Endothelial cell of umbilical vein (primary cell): ENCODE measurements at regions of chr16 and their contacts with region 1.

Region 1: DNA sequence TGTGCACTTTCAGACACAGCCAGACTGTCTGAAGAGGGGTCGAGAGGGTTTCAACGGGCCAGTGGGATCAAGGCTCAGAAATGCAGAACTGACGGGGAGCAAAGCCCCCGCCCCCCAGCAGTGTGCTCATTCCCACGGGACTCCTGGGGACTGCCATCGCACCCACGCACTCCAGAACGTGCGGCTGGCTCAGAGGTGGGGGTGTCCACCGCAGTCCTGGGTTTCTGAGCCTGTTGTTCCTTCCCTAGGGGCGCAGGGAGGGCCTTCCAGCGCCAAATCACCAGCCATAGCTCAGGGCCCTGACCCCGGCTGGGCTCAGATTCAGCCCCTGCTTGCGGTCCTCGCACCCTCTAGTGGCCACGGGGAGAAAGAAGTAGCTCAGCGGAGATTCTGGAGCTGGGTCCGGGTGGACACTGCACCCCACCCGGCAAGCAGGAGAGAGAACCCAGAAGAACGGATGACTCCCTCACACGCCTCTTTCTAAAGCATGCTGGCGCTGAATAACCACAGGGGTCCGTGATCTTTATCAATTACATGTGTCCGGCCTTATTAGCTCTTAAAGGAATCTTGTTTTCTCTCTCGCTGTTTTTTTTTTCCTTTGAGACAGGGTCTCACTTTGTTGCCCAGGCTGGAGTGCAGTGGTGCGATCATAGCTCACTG is 45.0 kb upstream of the USP7 start:
- DNase-seq: peak; percentile 59
- H3K4me3 ChIP-seq: peak overlapping the region in 1 of 3 experiments; percentile 3
- H3K27ac ChIP-seq: no peak overlapping the region
- H3K4me1 ChIP-seq: peaks cover 4% of the 10 kb centered on the region
- H3K27me3 ChIP-seq: no peaks in the 10 kb centered on the region
- CTCF ChIP-seq: peak; percentile 70 to 90
- POLR2A ChIP-seq: no peak

Region 2: GRCh38 chr16:8660841-8661301 is 347.9 kb before region 1 on chr16:
- CTCF ChIA-PET with region 1: interaction called, 9 read pairs
- POLR2A ChIA-PET with region 1: no interaction called
- dilution Hi-C with region 1: no loop called
- intact Hi-C with region 1: loop called (anchors 2 kb)
- DNase-seq: peak; percentile 53
- H3K4me3 ChIP-seq: no peak overlapping the region
- H3K27ac ChIP-seq: no peak overlapping the region
- H3K4me1 ChIP-seq: no peaks in the 10 kb centered on the region
- H3K27me3 ChIP-seq: peaks cover 0 to 6% of the 10 kb centered on the region in 2 experiments
- CTCF ChIP-seq: peak; percentile 65 to 75
- POLR2A ChIP-seq: no peak

Region 3: GRCh38 chr16:8899709-8900317 is 108.9 kb before region 1 on chr16:
- CTCF ChIA-PET with region 1: interaction called, 32 read pairs
- POLR2A ChIA-PET with region 1: no interaction called
- dilution Hi-C with region 1: no loop called
- intact Hi-C with region 1: loop called (anchors 1 kb)
- DNase-seq: no peak
- H3K4me3 ChIP-seq: no peak overlapping the region
- H3K27ac ChIP-seq: no peak overlapping the region
- H3K4me1 ChIP-seq: no peaks in the 10 kb centered on the region
- H3K27me3 ChIP-seq: no peaks in the 10 kb centered on the region
- CTCF ChIP-seq: no peak
- POLR2A ChIP-seq: no peak

Region 4: GRCh38 chr16:8936421-8936820 is 72.3 kb before region 1 on chr16:
- CTCF ChIA-PET with region 1: interaction called, 76 read pairs
- POLR2A ChIA-PET with region 1: interaction called, 3 read pairs
- dilution Hi-C with region 1: no loop called
- intact Hi-C with region 1: loop called (anchors 1 kb)
- DNase-seq: peak; percentile 29
- H3K4me3 ChIP-seq: no peak overlapping the region
- H3K27ac ChIP-seq: no peak overlapping the region
- H3K4me1 ChIP-seq: no peaks in the 10 kb centered on the region
- H3K27me3 ChIP-seq: no peaks in the 10 kb centered on the region
- CTCF ChIP-seq: peak; percentile 27 to 57
- POLR2A ChIP-seq: no peak

Region 5: DNA sequence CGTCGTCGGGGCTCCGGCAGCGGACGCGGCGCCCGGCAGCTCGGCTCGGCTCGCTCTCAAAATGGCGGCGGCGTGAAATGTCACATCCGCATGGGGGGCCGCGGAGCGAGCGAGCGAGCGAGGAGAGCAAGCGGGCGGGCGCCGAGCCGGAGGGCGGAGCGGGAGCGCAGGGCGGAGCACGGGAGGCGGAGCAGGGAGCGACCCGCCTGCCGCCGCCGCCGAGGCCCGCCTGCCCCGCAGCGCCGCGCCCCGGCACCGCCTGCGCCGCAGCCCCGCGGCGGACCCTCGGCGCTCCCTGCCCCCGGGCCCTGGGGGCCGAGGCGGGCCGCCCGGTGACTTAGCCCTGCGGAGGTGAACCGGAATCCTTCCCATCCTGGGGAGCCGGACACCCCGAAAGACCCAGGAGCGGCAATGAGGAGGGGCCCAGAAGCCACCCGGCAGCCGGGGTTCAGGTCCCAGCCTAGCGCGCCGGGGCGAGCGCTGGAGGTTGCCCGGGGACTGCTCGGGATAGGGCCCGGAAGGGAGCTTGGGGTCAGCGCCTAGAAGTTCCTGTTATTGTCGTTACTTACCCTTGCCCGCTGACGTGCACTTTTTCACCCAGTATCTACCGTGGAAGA is 44.8 kb before region 1 on chr16 and contains the start of gene USP7:
- CTCF ChIA-PET with region 1: interaction called, 10 read pairs
- POLR2A ChIA-PET with region 1: no interaction called
- dilution Hi-C with region 1: no loop called
- intact Hi-C with region 1: loop called (anchors 2 kb)
- DNase-seq: peak; percentile 88
- H3K4me3 ChIP-seq: peak within 1 kb of the TSS; percentile 45 to 82 (median 64)
- H3K27ac ChIP-seq: peak within 1 kb of the TSS; percentile 51
- H3K4me1 ChIP-seq: peaks cover 34% of the 10 kb centered on the region
- H3K27me3 ChIP-seq: no peaks in the 10 kb centered on the region
- CTCF ChIP-seq: no peak
- POLR2A ChIP-seq: peak; percentile 68
- total RNA-seq, gene USP7: 130 and 138 TPM in 2 replicates

Region 6: GRCh38 chr16:9033125-9033830 is 24.5 kb after region 1 on chr16:
- CTCF ChIA-PET with region 1: interaction called, 48 read pairs
- POLR2A ChIA-PET with region 1: no interaction called
- dilution Hi-C with region 1: no loop called
- intact Hi-C with region 1: no loop called
- DNase-seq: peak; percentile 41
- H3K4me3 ChIP-seq: no peak overlapping the region
- H3K27ac ChIP-seq: no peak overlapping the region
- H3K4me1 ChIP-seq: no peaks in the 10 kb centered on the region
- H3K27me3 ChIP-seq: no peaks in the 10 kb centered on the region
- CTCF ChIP-seq: peak; percentile 26 to 70
- POLR2A ChIP-seq: no peak

Region 7: GRCh38 chr16:9134739-9135138 is 126.0 kb after region 1 on chr16:
- CTCF ChIA-PET with region 1: interaction called, 42 read pairs
- POLR2A ChIA-PET with region 1: no interaction called
- dilution Hi-C with region 1: no loop called
- intact Hi-C with region 1: loop called (anchors 5 kb)
- DNase-seq: peak; percentile 47
- H3K4me3 ChIP-seq: no peak overlapping the region
- H3K27ac ChIP-seq: no peak overlapping the region
- H3K4me1 ChIP-seq: no peaks in the 10 kb centered on the region
- H3K27me3 ChIP-seq: no peaks in the 10 kb centered on the region
- CTCF ChIP-seq: peak; percentile 57 to 70
- POLR2A ChIP-seq: no peak